PC-9 (cell line): ENCODE measurements at regions of chr2 and their contacts with region 1.

Region 1: DNA sequence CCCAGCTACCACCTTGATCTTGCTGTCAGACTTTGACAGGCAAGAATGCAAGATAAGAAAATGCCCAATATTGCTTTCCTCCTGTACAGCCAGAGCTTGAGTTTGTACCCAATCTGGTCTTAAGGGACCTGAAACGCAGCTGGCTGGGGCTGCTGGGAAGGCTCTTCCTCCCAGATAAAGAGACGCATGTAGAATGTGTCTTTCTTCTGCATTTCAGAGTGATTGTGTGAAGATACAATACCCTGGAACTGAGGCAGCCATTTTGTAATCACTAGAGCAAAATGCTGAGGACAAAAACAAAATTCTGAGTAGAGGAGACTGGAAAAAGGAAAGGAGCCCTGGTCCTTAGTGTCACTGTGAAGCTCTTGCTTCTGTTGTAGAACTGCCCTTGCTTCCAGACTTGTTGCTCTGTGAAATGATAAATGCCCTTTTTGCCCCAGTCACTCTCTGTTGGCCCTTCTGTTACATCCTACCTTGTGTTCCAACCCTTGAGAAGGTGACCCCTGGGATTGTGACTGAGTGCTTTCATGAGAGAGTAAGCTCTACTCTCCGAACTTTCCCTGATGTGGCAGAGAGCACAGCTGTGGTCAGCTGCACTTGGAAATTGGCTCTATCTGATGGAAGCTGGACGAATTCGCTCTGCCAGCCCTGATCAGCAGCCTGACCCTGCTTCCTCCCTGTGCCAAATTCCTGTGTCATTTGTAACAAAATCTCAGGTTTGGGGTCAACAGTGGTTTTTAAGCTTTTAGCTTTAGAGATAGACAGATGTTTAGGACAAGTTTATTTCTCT is 137.4 kb upstream of the RBMS1 start:
- DNase-seq: no peak
- H3K4me3 ChIP-seq: no peak overlapping the region
- H3K27ac ChIP-seq: no peak overlapping the region
- H3K4me1 ChIP-seq: no peaks in the 10 kb centered on the region
- H3K27me3 ChIP-seq: no peaks in the 10 kb centered on the region
- CTCF ChIP-seq: no peak

Region 2: DNA sequence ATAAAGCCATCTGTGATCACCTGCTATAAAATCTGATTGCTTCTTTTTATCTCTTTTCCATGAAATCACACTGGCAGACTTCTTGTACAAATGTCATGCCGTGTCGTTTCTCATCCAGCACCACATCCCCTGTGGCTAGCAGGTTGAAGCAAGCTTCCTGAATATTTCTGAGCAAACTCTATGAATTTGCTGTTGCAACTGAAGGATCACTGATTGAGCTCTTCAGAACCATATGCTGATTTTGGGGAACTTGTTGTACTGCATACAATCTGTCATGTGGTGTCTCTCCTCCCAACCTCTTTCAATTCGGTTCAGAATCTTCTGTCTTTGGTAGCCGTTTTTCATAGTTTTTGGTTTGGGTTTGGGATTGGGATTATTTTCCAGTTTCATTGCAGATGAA is 79.7 kb before region 1 on chr2:
- CTCF ChIA-PET with region 1: no interaction called
- POLR2A ChIA-PET with region 1: no interaction called
- intact Hi-C with region 1: no loop called
- DNase-seq: no peak
- H3K4me3 ChIP-seq: no peak overlapping the region
- H3K27ac ChIP-seq: no peak overlapping the region
- H3K4me1 ChIP-seq: no peaks in the 10 kb centered on the region
- H3K27me3 ChIP-seq: no peaks in the 10 kb centered on the region
- CTCF ChIP-seq: no peak

Region 3: DNA sequence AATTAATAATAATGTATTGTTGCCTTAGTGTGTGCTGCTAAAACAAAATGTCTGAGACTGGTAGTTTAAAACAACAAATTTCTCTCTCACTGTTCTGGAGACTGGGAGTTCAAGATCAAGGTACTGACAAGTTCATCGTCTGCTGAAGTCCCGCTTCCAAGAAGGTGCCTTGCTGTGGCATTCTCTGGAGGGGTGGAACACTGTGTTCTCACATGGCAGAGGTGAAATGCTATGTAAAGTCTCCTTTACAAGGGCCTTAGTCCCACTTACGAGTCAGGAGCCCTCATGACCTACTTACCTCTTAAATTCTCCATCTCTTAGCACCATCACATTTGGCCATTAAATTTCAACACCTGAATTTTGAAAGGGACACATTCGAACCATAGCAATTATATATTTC is 161.8 kb after region 1 on chr2:
- CTCF ChIA-PET with region 1: no interaction called
- POLR2A ChIA-PET with region 1: interaction called, 11 read pairs
- intact Hi-C with region 1: no loop called
- DNase-seq: no peak
- H3K4me3 ChIP-seq: no peak overlapping the region
- H3K27ac ChIP-seq: no peak overlapping the region
- H3K4me1 ChIP-seq: no peaks in the 10 kb centered on the region; the same call in 1 of the 2 replicates
- H3K27me3 ChIP-seq: no peaks in the 10 kb centered on the region
- CTCF ChIP-seq: no peak

Region 4: GRCh38 chr2:160820691-160821090 is 189.7 kb after region 1 on chr2:
- CTCF ChIA-PET with region 1: no interaction called
- POLR2A ChIA-PET with region 1: no interaction called
- intact Hi-C with region 1: no loop called
- DNase-seq: no peak
- H3K4me3 ChIP-seq: no peak overlapping the region
- H3K27ac ChIP-seq: no peak overlapping the region
- H3K4me1 ChIP-seq: no peaks in the 10 kb centered on the region
- H3K27me3 ChIP-seq: no peaks in the 10 kb centered on the region
- CTCF ChIP-seq: no peak